Natural killer cell (primary cell): ENCODE measurements at regions of chr19 and their contacts with region 1.

Region 1: DNA sequence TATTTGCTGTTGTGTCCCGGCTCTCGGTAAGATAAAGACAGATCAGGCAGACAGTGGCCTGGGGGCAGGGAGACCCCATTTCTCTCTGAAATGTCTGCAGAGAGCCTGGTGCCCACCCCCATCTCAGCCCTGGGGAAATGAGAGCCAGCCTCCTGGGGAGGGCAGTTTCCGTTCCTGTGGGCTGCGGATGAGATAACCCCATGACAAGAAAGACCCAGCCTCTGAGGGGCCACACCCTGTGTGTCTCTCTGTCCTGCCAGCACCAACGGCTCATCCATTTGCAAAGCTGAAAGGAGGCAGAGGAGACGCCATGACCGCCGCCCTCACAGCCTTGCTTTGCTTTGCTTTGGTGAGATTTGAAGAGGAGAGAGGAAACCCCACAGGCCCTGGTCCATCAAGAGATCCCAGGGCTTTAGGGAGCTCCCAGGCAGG is 28.1 kb upstream of the KIR3DL3 start:
- DNase-seq: no peak
- ATAC-seq: no peak
- H3K4me3 ChIP-seq: no peak overlapping the region
- H3K4me3 Mint-ChIP-seq: peak overlapping the region; percentile 40
- H3K27ac ChIP-seq: no peak overlapping the region
- H3K27ac Mint-ChIP-seq: peak overlapping the region in 1 of 2 donors; percentile 78
- H3K4me1 ChIP-seq: peaks cover 34% of the 10 kb centered on the region
- H3K4me1 Mint-ChIP-seq: peaks cover 37 to 45% of the 10 kb centered on the region in 2 donors
- H3K27me3 ChIP-seq: peaks cover 4% of the 10 kb centered on the region
- H3K27me3 Mint-ChIP-seq: peaks cover 39 to 42% of the 10 kb centered on the region in 2 donors
- CTCF ChIP-seq: no peak

Region 2: DNA sequence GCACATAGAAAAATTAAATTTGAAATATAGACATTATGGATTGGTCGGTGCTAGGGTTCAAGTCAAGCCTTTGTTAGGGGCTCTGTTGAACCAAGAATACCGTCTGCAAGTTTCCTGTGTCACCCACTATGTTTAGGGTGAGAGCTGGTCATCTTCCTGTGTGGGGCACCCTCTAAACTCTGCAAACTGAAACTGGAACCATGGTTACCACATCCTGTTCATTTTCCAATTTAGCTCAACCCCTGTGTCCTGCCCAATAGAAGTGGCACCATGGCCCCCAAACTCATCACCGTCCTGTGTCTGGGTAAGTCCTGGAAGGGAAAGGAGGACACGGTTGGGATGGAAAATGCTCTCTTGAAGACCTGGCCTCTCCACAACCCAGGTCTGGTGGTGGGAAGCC is 163.6 kb before region 1 on chr19:
- intact Hi-C with region 1: loop called (anchors 10 kb)
- DNase-seq: peak; percentile 54 to 62
- ATAC-seq: peak; percentile 84 to 92 (median 91)
- H3K4me3 ChIP-seq: peak overlapping the region; percentile 51
- H3K4me3 Mint-ChIP-seq: peak overlapping the region; percentile 90
- H3K27ac ChIP-seq: peak overlapping the region; percentile 88
- H3K27ac Mint-ChIP-seq: peak overlapping the region; percentile 88 to 90
- H3K4me1 ChIP-seq: peaks cover 47% of the 10 kb centered on the region
- H3K4me1 Mint-ChIP-seq: peaks cover 78 to 92% of the 10 kb centered on the region in 2 donors
- H3K27me3 ChIP-seq: peaks cover 6% of the 10 kb centered on the region
- H3K27me3 Mint-ChIP-seq: peaks cover 5 to 12% of the 10 kb centered on the region in 2 donors
- CTCF ChIP-seq: no peak

Region 3: GRCh38 chr19:54561840-54562239 is 134.3 kb before region 1 on chr19:
- intact Hi-C with region 1: no loop called
- DNase-seq: no peak
- ATAC-seq: no peak
- H3K4me3 ChIP-seq: no peak overlapping the region
- H3K4me3 Mint-ChIP-seq: no peak overlapping the region
- H3K27ac ChIP-seq: no peak overlapping the region
- H3K27ac Mint-ChIP-seq: no peak overlapping the region
- H3K4me1 ChIP-seq: no peaks in the 10 kb centered on the region
- H3K4me1 Mint-ChIP-seq: no peaks in the 10 kb centered on the region
- H3K27me3 ChIP-seq: peaks cover 4% of the 10 kb centered on the region
- H3K27me3 Mint-ChIP-seq: peaks cover 29 to 52% of the 10 kb centered on the region in 2 donors
- CTCF ChIP-seq: no peak

Region 4: DNA sequence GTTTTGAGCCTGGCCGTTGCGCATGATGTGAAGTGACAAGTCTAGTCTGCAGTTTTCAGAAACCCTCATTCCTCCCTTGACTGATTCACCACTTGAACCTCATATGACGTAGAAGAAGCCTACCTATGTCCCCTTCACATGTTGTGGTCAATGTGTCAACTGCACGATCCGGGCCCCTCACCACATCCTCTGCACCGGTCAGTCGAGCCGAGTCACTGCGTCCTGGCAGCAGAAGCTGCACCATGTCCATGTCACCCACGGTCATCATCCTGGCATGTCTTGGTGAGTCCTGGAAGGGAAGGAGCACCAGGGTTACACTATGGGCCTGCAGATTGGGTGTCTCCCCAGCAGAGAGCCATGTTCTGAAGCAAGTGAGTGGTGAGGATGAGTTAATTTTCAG is 107.3 kb after region 1 on chr19 and contains the start of gene KIR2DL4:
- intact Hi-C with region 1: loop called (anchors 10 kb)
- DNase-seq: peak; percentile 53 to 76
- ATAC-seq: peak; percentile 73 to 85 (median 85)
- H3K4me3 ChIP-seq: peak within 1 kb of the TSS; percentile 16
- H3K4me3 Mint-ChIP-seq: peak within 1 kb of the TSS; percentile 80
- H3K27ac ChIP-seq: peak within 1 kb of the TSS; percentile 55
- H3K27ac Mint-ChIP-seq: peak within 1 kb of the TSS; percentile 84 to 86
- H3K4me1 ChIP-seq: peaks cover 45% of the 10 kb centered on the region
- H3K4me1 Mint-ChIP-seq: peaks cover 53 to 57% of the 10 kb centered on the region in 2 donors
- H3K27me3 ChIP-seq: no peaks in the 10 kb centered on the region
- H3K27me3 Mint-ChIP-seq: peaks cover 0 to 4% of the 10 kb centered on the region in 2 donors
- CTCF ChIP-seq: no peak
- total RNA-seq, gene KIR2DL4: 7.1 to 14.5 (median 7.3) TPM